OCI-LY7 (cell line): ENCODE measurements at regions of chr1 and their contacts with region 1.

Region 1: GRCh38 chr1:234610348-234611152 is 572 bp upstream of the IRF2BP2 start:
- DNase-seq: peak; percentile 79
- H3K4me3 ChIP-seq: peak overlapping the region; percentile 70
- H3K27ac ChIP-seq: peak overlapping the region; percentile 80
- H3K4me1 ChIP-seq: peaks cover 63% of the 10 kb centered on the region
- CTCF ChIP-seq: no peak

Region 2: GRCh38 chr1:234486498-234487448 is 123.8 kb before region 1 on chr1:
- CTCF ChIA-PET with region 1: no interaction called
- POLR2A ChIA-PET with region 1: interaction called, 24 read pairs
- intact Hi-C with region 1: no loop called
- DNase-seq: peak; percentile 77
- H3K4me3 ChIP-seq: peak overlapping the region; percentile 25
- H3K27ac ChIP-seq: no peak overlapping the region
- H3K4me1 ChIP-seq: peaks cover 42% of the 10 kb centered on the region
- CTCF ChIP-seq: peak; percentile 97

Region 3: GRCh38 chr1:234599617-234600417 is 10.7 kb before region 1 on chr1:
- CTCF ChIA-PET with region 1: interaction called, 4 read pairs
- POLR2A ChIA-PET with region 1: interaction called, 50 read pairs
- intact Hi-C with region 1: loop called (anchors 1 kb)
- DNase-seq: peak; percentile 88
- H3K4me3 ChIP-seq: peak overlapping the region; percentile 69
- H3K27ac ChIP-seq: peak overlapping the region; percentile 93
- H3K4me1 ChIP-seq: peaks cover 69% of the 10 kb centered on the region
- CTCF ChIP-seq: 0 out of 2 replicates have a peak, but pooled peaks have one; percentile 15

Region 4: DNA sequence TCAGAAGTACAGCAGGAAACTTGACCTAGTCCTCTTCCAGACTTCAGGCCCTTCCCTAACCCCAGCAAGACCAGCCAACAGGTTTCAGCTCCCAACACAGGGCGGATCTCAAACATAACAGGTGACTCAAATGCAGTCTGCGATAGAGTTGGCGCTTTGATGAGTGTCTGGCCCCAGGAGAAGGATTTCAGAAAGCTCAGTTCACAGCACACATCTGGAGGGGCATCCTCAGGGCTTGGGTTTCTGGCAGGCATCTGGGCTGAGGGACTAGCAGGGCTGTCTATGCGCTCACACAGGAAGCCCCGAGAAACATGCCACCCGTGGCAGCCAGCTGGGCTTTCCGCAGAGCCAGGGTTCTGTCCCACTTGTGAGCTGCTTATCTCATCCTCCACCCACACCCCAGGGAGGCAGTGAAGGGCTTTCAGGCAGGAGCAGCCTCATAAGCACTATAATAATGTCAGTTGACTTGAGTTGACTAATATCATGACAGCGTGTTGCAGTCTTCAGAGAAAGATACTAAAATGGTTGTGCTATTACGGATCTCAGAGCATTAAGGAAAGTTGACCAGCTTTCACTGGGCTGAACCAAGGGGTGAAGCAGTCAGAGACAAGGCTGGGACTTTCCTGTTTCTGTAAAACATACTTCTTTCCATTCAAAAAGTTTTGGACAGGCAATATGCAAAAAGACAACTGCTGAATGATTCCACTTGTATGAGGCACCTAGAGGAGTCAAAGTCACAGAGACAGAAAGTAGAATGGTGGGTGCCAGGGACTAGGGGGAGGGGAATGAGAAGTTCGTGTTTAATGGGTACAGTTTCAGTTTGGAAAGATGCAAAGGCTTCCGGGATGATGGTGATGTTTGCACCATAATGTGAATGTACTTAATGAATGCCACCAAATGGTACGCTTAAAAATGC is 232.4 kb after region 1 on chr1:
- CTCF ChIA-PET with region 1: no interaction called
- POLR2A ChIA-PET with region 1: interaction called, 8 read pairs
- intact Hi-C with region 1: loop called (anchors 1 kb)
- DNase-seq: peak; percentile 66
- H3K4me3 ChIP-seq: peak overlapping the region; percentile 18
- H3K27ac ChIP-seq: peak overlapping the region; percentile 52
- H3K4me1 ChIP-seq: peaks cover 62% of the 10 kb centered on the region
- CTCF ChIP-seq: 0 out of 2 replicates have a peak, but pooled peaks have one; percentile 21

Region 5: GRCh38 chr1:234978397-234979295 is 368.1 kb after region 1 on chr1:
- CTCF ChIA-PET with region 1: interaction called, 4 read pairs
- POLR2A ChIA-PET with region 1: interaction called, 10 read pairs
- intact Hi-C with region 1: loop called (anchors 5 kb)
- DNase-seq: peak; percentile 94
- H3K4me3 ChIP-seq: peak overlapping the region; percentile 56
- H3K27ac ChIP-seq: peak overlapping the region; percentile 92
- H3K4me1 ChIP-seq: peaks cover 68% of the 10 kb centered on the region
- CTCF ChIP-seq: peak; percentile 63